Panc1 (cell line): ENCODE measurements at regions of chr5 and their contacts with region 1.

Region 1: DNA sequence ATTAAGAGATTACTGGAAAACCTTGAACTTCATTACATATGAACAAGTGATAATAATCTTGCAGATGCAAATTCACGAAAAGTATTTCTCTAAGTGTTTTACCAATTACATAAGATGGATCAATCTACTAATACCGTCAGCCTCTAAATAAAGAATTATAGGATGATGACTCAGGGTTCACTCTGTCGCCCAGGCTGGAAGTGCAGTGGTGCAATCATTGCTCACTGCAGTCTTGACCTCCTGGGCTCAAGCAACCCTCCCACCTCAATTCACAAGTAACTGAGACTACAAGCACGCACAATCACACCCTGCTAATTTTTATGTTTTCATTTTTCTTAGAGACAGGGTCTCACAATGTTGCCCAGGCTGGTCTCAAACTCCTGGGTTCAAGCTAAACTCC is 56.1 kb downstream of the CHD1 start:
- DNase-seq: no peak
- ATAC-seq: no peak
- H3K4me3 ChIP-seq: no peak overlapping the region
- H3K27ac ChIP-seq: no peak overlapping the region
- H3K4me1 ChIP-seq: no peaks in the 10 kb centered on the region
- H3K27me3 ChIP-seq: no peaks in the 10 kb centered on the region
- CTCF ChIP-seq: no peak

Region 2: DNA sequence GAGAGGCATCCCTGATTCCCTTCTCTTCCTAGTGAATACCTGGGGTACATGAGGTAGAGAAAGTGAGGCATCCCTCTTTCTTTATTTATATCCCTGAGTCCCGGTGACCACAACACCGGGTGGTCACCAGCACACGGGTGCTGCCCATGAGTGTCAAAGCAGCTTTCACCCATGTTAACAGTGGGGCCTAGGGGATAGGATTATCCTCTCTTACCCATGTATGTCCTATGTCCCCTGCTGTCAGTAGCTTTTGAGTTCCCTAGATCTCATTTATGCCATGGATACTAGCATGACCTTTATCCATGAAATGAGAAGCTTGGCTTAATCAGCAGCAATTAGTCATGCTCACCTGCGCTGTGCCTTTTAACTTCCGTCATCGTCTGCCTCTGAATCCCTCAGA is 27.8 kb before region 1 on chr5:
- CTCF ChIA-PET with region 1: no interaction called
- POLR2A ChIA-PET with region 1: interaction called, 12 read pairs
- in situ Hi-C with region 1: no loop called
- intact Hi-C with region 1: no loop called
- DNase-seq: no peak
- ATAC-seq: no peak
- H3K4me3 ChIP-seq: no peak overlapping the region
- H3K27ac ChIP-seq: no peak overlapping the region
- H3K4me1 ChIP-seq: no peaks in the 10 kb centered on the region
- H3K27me3 ChIP-seq: no peaks in the 10 kb centered on the region
- CTCF ChIP-seq: no peak

Region 3: GRCh38 chr5:98975682-98976407 is 103.2 kb after region 1 on chr5:
- CTCF ChIA-PET with region 1: no interaction called
- POLR2A ChIA-PET with region 1: no interaction called
- in situ Hi-C with region 1: no loop called
- intact Hi-C with region 1: no loop called
- DNase-seq: no peak
- ATAC-seq: no peak
- H3K4me3 ChIP-seq: no peak overlapping the region
- H3K27ac ChIP-seq: no peak overlapping the region
- H3K4me1 ChIP-seq: no peaks in the 10 kb centered on the region
- H3K27me3 ChIP-seq: no peaks in the 10 kb centered on the region
- CTCF ChIP-seq: no peak